ENCODE measurements at regions of chr4 and their contacts with region 1.

Region 1: GRCh38 chr4:88211473-88212252 is 53.2 kb upstream of the ABCG2 start:
- DNase-seq: peak; percentile 55
- H3K4me3 ChIP-seq: no peak overlapping the region
- H3K27ac ChIP-seq: no peak overlapping the region
- H3K4me1 ChIP-seq: no peaks in the 10 kb centered on the region
- H3K27me3 ChIP-seq: 0 out of 2 replicates have a peak, but pooled peaks cover 5% of the 10 kb centered on the region

Region 2: GRCh38 chr4:87150498-87151261 is 1061.0 kb before region 1 on chr4:
- in situ Hi-C with region 1: no loop called
- DNase-seq: peak; percentile 71
- H3K4me3 ChIP-seq: no peak overlapping the region
- H3K27ac ChIP-seq: no peak overlapping the region
- H3K4me1 ChIP-seq: no peaks in the 10 kb centered on the region
- H3K27me3 ChIP-seq: no peaks in the 10 kb centered on the region

Region 3: GRCh38 chr4:87679449-87680169 is 532.1 kb before region 1 on chr4:
- in situ Hi-C with region 1: loop called (anchors 10 kb)
- DNase-seq: peak; percentile 68
- H3K4me3 ChIP-seq: no peak overlapping the region
- H3K27ac ChIP-seq: no peak overlapping the region
- H3K4me1 ChIP-seq: no peaks in the 10 kb centered on the region
- H3K27me3 ChIP-seq: no peaks in the 10 kb centered on the region

Region 4: DNA sequence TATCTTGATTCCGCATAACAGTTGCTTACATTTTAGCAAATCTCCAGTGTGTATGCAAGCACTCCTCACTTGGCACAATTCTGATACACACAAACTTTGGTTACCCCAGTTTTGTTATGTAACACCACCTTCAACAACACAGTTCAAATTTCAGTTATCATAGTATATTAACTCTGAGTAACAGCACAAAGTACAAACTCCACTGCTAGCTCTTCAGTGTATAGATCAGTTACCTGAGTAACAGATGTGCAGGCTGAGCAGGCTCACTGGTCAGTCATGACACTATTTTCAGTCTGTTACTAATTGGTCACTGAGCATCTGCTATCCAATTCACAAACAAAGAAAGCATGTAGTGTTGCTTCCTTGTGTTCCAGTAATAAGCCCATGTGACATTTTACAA is 148.8 kb before region 1 on chr4:
- in situ Hi-C with region 1: loop called (anchors 10 kb)
- DNase-seq: no peak
- H3K4me3 ChIP-seq: no peak overlapping the region
- H3K27ac ChIP-seq: no peak overlapping the region
- H3K4me1 ChIP-seq: no peaks in the 10 kb centered on the region
- H3K27me3 ChIP-seq: no peaks in the 10 kb centered on the region

Region 5: DNA sequence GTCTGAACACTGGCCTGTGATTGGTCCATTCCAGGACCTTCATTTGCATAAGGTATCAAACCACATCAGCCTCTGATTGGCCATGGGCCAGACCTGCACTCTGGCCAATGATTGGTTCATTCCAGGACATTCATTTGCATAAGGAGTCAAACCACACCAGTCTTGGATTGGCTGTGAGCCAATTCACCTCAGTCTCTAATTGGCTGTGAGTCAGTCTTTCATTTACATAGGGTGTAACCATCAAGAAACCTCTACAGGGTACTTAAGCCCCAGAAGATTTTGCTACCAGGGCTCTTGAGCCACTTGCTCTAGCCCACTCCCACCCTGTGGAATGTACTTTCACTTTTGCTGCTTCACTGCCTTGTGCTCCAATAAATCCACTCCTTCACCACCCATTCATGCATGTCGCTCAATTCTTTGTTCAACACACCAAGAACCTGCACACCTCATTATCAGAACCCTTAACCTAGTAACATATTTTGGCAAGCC is 231.1 kb after region 1 on chr4:
- in situ Hi-C with region 1: no loop called
- DNase-seq: no peak
- H3K4me3 ChIP-seq: no peak overlapping the region
- H3K27ac ChIP-seq: no peak overlapping the region
- H3K4me1 ChIP-seq: no peaks in the 10 kb centered on the region
- H3K27me3 ChIP-seq: no peaks in the 10 kb centered on the region

Region 6: GRCh38 chr4:88514557-88515511 is 303.2 kb after region 1 on chr4:
- in situ Hi-C with region 1: loop called (anchors 5 kb)
- DNase-seq: no peak
- H3K4me3 ChIP-seq: no peak overlapping the region
- H3K27ac ChIP-seq: no peak overlapping the region
- H3K4me1 ChIP-seq: no peaks in the 10 kb centered on the region
- H3K27me3 ChIP-seq: no peaks in the 10 kb centered on the region

Measured in GM23248 (cell line).